Activated B cell treated with CpG ODN at 0.5 μM for 24 hours (primary cell): ENCODE measurements at regions of chr7 and their contacts with region 1.

Region 1: DNA sequence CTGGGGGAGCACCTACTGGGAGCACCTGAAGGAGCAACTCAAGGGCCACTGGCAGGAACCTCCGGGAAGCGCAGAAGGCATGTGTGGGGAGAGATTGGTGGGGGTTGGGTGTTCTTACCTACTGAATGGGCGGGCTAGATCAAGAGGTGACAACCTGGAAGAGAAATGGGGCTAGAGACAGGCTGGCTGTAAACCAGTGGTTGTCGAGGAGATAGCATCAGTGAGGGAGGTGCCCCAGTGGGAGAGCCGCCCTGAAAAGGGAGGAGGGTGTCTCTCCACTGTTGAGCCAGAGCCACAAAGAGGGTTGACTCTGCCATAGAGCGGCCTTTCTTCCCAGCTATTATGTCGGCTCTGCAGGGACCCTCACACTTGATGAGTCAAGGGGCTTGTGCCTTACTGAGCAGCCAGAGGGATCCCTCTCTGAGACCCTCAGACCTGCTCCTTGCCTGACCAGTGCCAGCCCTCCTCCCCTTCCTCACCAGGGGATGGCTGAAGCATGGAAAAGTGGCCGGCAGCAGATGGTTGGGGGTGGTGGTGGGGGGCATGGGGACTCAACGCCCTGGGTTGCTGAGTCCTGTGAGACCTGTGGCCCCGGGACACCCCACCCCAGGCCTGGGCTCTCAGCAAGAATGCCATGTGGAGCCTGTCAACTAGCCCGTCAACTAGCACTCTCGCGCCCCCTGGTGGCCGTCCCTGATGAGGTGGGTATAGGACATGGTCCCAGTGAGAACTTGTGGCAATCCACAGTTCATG is 36.5 kb upstream of the PURB start:
- DNase-seq: peak; percentile 89
- ATAC-seq: peak; percentile 98
- H3K4me3 Mint-ChIP-seq: no peak overlapping the region
- H3K27ac Mint-ChIP-seq: no peak overlapping the region
- H3K4me1 Mint-ChIP-seq: peaks cover 3% of the 10 kb centered on the region
- H3K27me3 Mint-ChIP-seq: no peaks in the 10 kb centered on the region
- CTCF ChIP-seq: no peak

Region 2: GRCh38 chr7:44240983-44241510 is 680.7 kb before region 1 on chr7:
- CTCF ChIA-PET with region 1: no interaction called
- POLR2A ChIA-PET with region 1: no interaction called
- intact Hi-C with region 1: loop called (anchors 1 kb)
- DNase-seq: peak; percentile 41
- ATAC-seq: peak; percentile 87
- H3K4me3 Mint-ChIP-seq: peak overlapping the region; percentile 56
- H3K27ac Mint-ChIP-seq: no peak overlapping the region
- H3K4me1 Mint-ChIP-seq: no peaks in the 10 kb centered on the region
- H3K27me3 Mint-ChIP-seq: no peaks in the 10 kb centered on the region
- CTCF ChIP-seq: no peak

Region 3: DNA sequence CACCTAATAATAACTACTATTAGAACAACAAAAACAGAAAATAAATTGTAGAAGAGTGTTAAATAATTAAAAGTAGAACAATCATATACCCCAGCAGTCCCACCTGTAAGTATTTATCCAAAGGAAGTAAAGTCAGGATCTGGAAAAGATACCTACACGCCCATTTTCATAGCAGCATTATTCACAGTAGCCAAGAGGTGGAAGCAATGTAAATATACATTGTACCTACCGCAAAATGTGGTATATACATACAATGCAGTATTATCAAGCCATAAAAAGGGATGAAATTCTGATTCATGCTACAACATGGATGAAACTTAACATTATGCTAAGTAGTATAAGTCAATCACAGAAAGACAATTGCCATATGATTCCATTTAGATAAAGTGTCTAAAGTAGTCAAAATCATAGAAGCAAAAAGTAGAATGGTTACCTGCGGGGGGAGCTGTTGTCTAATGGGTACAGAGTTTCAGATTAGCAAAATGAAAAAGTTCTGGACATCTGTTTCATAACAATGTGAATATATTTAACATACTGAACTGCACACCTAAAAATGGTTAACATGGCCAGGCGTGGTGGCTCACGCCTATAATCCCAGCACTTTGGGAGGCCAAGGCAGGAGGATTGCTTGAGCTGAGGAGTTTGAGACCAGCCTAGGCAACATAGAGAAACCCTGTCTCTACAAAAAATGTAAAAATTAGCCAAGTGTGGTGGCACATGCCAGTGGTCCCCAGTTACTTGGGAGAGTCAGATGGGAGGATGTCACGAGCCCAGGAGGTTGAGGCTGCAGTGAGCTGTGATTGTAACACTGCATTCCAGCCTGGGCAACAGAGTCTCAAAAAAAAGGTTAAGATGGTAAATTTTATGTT is 333.7 kb before region 1 on chr7:
- CTCF ChIA-PET with region 1: interaction called, 3 read pairs
- POLR2A ChIA-PET with region 1: no interaction called
- intact Hi-C with region 1: loop called (anchors 1 kb)
- DNase-seq: no peak
- ATAC-seq: peak; percentile 79
- H3K4me3 Mint-ChIP-seq: no peak overlapping the region
- H3K27ac Mint-ChIP-seq: no peak overlapping the region
- H3K4me1 Mint-ChIP-seq: peaks cover 6% of the 10 kb centered on the region
- H3K27me3 Mint-ChIP-seq: peaks cover 3% of the 10 kb centered on the region
- CTCF ChIP-seq: no peak

Region 4: GRCh38 chr7:44858161-44858560 is 63.6 kb before region 1 on chr7:
- CTCF ChIA-PET with region 1: interaction called, 37 read pairs
- POLR2A ChIA-PET with region 1: interaction called, 3 read pairs
- intact Hi-C with region 1: loop called (anchors 1 kb)
- DNase-seq: no peak
- ATAC-seq: no peak
- H3K4me3 Mint-ChIP-seq: no peak overlapping the region
- H3K27ac Mint-ChIP-seq: no peak overlapping the region
- H3K4me1 Mint-ChIP-seq: peaks cover 4% of the 10 kb centered on the region
- H3K27me3 Mint-ChIP-seq: peaks cover 2% of the 10 kb centered on the region
- CTCF ChIP-seq: no peak